Activated CD4-positive, alpha-beta memory T cell treated with anti-CD3 and anti-CD28 coated beads for 36 hours (primary cell): ENCODE measurements at regions of chr3 and their contacts with region 1.

Region 1: DNA sequence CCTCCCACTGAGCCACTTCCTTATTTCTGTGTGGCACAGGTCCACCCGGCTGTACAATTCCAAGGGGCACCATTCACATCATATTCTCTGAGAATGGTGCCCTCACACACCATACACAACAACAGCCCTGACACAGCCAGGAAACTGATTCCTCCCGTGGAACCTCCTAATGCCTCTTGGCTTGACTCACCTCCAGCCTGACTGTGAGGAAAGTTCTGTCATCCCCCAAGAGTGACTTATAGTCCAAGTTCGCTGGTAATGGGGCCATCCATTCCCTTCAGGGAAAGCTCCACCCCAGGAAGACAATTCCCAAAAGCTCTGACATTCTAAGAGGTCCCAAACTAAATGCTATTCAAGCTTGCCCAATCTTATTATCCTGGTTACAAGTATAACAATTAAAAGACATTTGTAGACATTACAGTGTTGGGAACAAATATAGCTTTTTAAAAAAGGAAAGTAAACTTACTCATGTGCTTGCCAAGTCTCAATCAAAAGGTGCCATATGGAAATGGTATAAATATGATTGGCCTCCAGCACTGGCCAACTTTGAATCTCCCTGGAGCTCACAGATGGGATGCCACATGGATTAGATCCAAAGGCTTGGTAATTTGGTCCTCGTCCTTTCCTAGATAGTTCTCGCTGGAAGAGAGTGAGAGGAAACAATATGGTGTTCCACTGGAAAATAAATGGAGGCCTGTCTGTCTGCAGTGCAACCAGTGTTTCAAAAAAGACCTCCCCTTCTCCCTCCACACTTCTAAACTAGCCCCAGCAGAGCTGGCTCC is 56.3 kb upstream of the PSMD6 start:
- DNase-seq: no peak
- H3K4me3 Mint-ChIP-seq: no peak overlapping the region
- H3K27ac Mint-ChIP-seq: no peak overlapping the region
- H3K4me1 Mint-ChIP-seq: peaks cover 5% of the 10 kb centered on the region
- H3K27me3 Mint-ChIP-seq: peaks cover 27% of the 10 kb centered on the region

Region 2: DNA sequence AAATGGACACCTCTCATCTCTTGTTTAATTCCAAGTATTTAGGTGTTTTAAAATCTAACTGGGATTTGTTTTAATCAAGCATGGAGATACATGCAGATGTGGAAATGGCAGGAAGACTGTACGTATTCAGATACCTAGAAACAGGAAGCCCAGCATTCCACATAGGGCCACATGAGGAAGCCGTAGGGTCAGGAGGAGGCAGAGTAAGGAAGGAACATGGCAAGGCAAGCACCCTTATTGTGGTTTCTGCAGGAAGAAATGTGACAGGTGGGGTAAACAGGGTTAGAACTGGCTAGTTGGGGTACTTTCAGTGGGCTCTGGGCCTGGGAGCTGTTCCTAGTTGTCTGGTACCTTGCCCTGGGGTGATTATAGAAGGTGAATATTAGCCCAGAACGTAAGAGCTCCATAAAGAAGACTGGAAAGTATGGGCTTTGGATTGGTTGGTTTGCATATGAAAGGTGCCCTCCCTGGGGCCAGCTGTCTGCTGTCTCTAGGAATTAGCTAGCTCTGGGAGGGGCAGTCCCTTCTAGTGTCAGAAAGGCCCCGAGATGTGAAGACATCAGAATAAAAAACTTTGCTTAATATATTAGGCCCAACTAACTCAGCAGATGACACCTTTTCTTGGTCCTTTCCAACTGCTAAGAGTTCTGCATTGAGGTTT is 1096.6 kb before region 1 on chr3:
- CTCF ChIA-PET with region 1: no interaction called
- POLR2A ChIA-PET with region 1: no interaction called
- intact Hi-C with region 1: no loop called
- DNase-seq: no peak
- H3K4me3 Mint-ChIP-seq: no peak overlapping the region
- H3K27ac Mint-ChIP-seq: no peak overlapping the region
- H3K4me1 Mint-ChIP-seq: no peaks in the 10 kb centered on the region
- H3K27me3 Mint-ChIP-seq: peaks cover 1% of the 10 kb centered on the region

Region 3: DNA sequence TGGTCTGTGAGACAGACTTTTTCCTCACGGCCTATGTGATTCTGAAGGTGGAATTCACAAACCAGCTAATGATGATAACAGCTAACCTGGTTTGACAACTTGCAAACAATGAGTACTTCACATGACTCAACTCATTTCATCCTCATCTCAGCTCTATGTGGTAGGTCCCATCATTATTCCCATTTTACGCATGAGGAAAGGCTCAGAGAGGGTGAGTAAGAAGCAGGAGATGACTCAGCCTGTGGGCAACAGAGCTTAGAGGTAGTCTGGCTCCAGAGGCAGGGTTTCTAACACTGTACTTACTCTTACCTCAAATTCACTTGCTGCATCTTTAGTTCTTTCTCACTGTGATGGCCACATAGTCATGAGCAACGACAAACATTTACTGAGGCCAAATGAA is 30.4 kb before region 1 on chr3:
- CTCF ChIA-PET with region 1: no interaction called
- POLR2A ChIA-PET with region 1: no interaction called
- intact Hi-C with region 1: loop called (anchors 2 kb)
- DNase-seq: peak; percentile 37
- H3K4me3 Mint-ChIP-seq: no peak overlapping the region
- H3K27ac Mint-ChIP-seq: no peak overlapping the region
- H3K4me1 Mint-ChIP-seq: peaks cover 3% of the 10 kb centered on the region
- H3K27me3 Mint-ChIP-seq: peaks cover 18% of the 10 kb centered on the region

Region 4: DNA sequence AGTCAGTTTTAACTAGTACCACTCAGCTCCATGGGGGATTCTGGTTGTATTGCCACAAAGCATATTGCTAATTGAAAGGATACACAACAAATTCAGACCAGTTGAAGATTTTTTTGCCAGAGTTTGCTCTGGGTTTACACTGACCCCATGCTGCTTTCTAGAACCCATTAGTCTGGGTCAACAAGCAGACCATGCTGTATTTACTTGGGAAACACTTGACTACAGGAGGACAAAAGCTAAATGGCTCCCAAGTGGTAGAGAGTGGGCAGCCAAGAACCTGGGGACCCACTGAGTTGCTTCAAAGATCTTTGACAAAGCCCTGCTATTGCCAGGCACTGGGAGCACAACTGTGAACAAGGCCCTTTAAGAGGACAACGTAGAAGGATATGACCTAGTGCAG is 30.5 kb after region 1 on chr3:
- CTCF ChIA-PET with region 1: no interaction called
- POLR2A ChIA-PET with region 1: no interaction called
- intact Hi-C with region 1: no loop called
- DNase-seq: no peak
- H3K4me3 Mint-ChIP-seq: no peak overlapping the region
- H3K27ac Mint-ChIP-seq: no peak overlapping the region
- H3K4me1 Mint-ChIP-seq: no peaks in the 10 kb centered on the region
- H3K27me3 Mint-ChIP-seq: peaks cover 9% of the 10 kb centered on the region

Region 5: DNA sequence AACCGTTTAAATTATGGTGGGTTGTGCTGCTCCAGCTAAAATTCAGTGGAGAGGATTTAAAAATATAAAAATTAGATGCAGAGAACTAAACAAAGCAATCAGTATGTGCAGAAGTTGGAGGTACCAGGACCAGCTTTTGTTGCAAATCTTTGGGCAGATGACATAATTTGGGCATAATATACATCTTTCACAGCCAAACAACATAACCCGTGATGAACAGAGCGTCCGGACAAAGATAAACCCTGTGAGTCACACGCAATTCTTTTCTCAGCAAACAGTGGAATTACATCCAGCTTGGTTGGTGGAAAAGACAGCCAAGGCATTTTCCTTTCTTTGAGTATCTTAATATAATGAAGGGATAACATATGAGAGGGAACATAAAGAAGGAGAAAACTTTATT is 1027.6 kb after region 1 on chr3:
- CTCF ChIA-PET with region 1: no interaction called
- POLR2A ChIA-PET with region 1: no interaction called
- intact Hi-C with region 1: no loop called
- DNase-seq: no peak
- H3K4me3 Mint-ChIP-seq: no peak overlapping the region
- H3K27ac Mint-ChIP-seq: no peak overlapping the region
- H3K4me1 Mint-ChIP-seq: no peaks in the 10 kb centered on the region
- H3K27me3 Mint-ChIP-seq: no peaks in the 10 kb centered on the region